ENCODE measurements at regions of chr6 and their contacts with region 1.

Region 1: DNA sequence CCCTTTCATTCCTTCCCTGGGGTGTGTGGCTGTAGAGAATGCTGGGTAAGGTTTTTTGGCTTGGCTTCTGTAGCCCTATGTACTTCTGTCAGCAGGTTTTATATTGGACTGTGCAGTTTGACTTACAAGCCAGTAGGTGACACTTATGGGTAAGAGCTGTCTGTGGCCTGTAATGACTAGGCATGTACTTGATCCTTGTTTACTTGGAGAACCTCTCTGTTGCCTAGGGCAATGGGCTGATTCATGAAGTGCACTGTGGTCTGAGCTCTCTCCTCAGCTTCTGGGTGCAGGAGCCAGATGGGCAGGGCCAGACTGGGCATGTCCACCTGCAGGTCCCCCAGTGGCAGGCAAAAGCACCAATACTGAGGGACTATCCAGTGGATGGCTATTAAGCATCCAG is 544.6 kb downstream of the ADGRB3 start:
- DNase-seq: no peak
- H3K4me3 ChIP-seq: no peak overlapping the region
- H3K27ac ChIP-seq: no peak overlapping the region
- H3K4me1 ChIP-seq: no peaks in the 10 kb centered on the region
- H3K27me3 ChIP-seq: no peaks in the 10 kb centered on the region
- CTCF ChIP-seq: peak in 2 of 3 experiments; percentile 26 to 33; a peak in 2 of 4 replicates
- EP300 ChIP-seq: no peak
- POLR2A ChIP-seq: no peak
- RAD21 ChIP-seq: peak; percentile 40 to 52; a peak in 3 of 4 replicates

Region 2: GRCh38 chr6:69164564-69165229 is 15.0 kb before region 1 on chr6:
- CTCF ChIA-PET with region 1: interaction called, 33 read pairs
- POLR2A ChIA-PET with region 1: no interaction called
- DNase-seq: no peak
- H3K4me3 ChIP-seq: no peak overlapping the region
- H3K27ac ChIP-seq: no peak overlapping the region
- H3K4me1 ChIP-seq: peaks cover 0 to 6% (median 3%) of the 10 kb centered on the region in 4 experiments; a peak in 2 of 7 replicates
- H3K27me3 ChIP-seq: no peaks in the 10 kb centered on the region
- CTCF ChIP-seq: peak in 2 of 3 experiments; percentile 23 to 62; a peak in 2 of 4 replicates
- EP300 ChIP-seq: no peak
- POLR2A ChIP-seq: no peak
- RAD21 ChIP-seq: peak; percentile 42 to 54; a peak in 3 of 4 replicates

Measured in H1 (cell line).